GM12878 (cell line): ENCODE measurements at regions of chr2 and their contacts with region 1.

Region 1: DNA sequence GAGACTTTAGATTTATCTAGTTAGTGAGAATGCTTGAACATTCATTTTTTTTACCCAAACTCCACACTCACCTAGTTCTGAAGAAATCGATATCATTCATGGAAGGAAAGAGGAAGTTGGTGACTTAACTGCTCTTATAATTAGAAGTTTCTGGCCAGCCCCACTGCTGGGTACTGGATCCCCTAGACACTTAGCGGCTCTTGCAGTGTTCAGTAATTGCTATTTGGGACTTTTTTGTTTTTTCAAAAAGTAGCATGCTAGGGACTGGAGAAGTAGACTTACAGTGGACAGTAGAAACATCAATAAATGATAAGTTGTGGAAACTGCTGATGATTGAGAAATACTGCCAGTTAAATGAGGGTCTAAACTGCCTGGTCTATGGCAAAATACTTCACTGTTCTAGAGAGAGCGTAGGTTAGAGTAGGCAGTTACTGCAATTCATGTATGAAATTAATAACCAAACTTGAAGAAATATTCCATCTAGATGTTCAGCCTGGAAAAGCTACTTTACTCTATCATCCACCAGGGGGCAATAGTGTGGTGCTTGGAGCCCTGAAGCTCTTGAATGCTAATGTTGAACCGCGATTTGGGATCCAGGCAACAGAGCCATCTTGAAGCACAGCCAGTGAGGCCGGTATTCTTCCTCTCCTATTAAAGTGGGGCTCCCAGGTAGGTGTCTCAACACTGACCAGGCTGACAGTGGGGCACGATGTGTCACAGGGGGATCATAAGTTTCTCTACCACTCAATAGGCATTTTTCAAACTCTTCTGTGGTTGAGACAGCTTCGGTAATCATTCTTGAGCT is 146.1 kb upstream of the SESTD1 start:
- DNase-seq: no peak
- ATAC-seq: peak; percentile 92
- H3K4me3 ChIP-seq: no peak overlapping the region
- H3K27ac ChIP-seq: no peak overlapping the region
- H3K4me1 ChIP-seq: no peaks in the 10 kb centered on the region
- H3K27me3 ChIP-seq: no peaks in the 10 kb centered on the region
- CTCF ChIP-seq: peak; percentile 63 to 73 (median 71)
- EP300 ChIP-seq: no peak
- POLR2A ChIP-seq: no peak
- RAD21 ChIP-seq: peak; percentile 62

Region 2: DNA sequence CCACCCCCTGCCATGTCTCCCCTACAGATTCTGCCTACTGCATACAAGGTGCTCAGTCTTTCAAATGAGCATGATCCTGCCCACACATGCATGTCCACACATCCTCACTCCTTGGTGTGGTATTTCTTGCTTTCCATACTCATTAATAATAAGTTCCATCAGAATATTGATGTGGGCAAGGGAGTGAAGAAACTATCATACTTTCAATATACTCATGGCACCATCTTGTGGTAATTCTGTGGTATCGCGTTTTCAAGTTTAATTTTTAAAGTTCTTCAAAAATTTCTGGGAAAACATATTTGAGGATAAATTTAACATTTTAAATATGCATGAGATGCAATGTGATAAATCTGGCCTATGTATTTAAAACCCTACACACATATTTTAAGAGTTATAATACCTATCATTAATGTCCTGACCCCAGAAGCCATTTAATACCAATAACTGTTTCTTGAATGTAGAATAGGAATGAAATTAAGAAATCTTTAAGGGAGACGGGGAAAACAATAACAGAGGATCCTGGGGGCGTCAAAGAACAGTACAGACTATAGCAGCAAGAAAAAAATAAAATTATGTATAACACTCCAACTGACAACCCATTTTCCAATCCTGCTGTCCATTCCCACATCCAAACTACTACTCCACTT is 340.5 kb after region 1 on chr2:
- CTCF ChIA-PET with region 1: interaction called, 5 read pairs
- POLR2A ChIA-PET with region 1: no interaction called
- RAD21 ChIA-PET with region 1: no interaction called
- SMC1A ChIA-PET with region 1: no interaction called
- in situ Hi-C with region 1: loop called (anchors 10 kb)
- intact Hi-C with region 1: loop called (anchors 2 kb)
- DNase-seq: no peak
- ATAC-seq: peak; percentile 50
- H3K4me3 ChIP-seq: no peak overlapping the region
- H3K27ac ChIP-seq: no peak overlapping the region
- H3K4me1 ChIP-seq: no peaks in the 10 kb centered on the region
- H3K27me3 ChIP-seq: no peaks in the 10 kb centered on the region
- CTCF ChIP-seq: peak; percentile 42 to 66 (median 57); a peak in 5 of 6 replicates
- EP300 ChIP-seq: no peak
- POLR2A ChIP-seq: no peak
- RAD21 ChIP-seq: peak; percentile 78